Mammary epithelial cell (primary cell): ENCODE measurements at regions of chr13 and their contacts with region 1.

Region 1: GRCh38 chr13:21458813-21459701 is at the start of gene ZDHHC20:
- DNase-seq: peak; percentile 78
- H3K4me3 ChIP-seq: peak within 1 kb of the TSS; percentile 92 to 99 (median 95)
- H3K27ac ChIP-seq: peak within 1 kb of the TSS; percentile 70
- H3K4me1 ChIP-seq: peaks cover 3% of the 10 kb centered on the region
- H3K27me3 ChIP-seq: no peaks in the 10 kb centered on the region
- CTCF ChIP-seq: no peak
- total RNA-seq, gene ZDHHC20: 53.7 to 68.3 TPM

Region 2: DNA sequence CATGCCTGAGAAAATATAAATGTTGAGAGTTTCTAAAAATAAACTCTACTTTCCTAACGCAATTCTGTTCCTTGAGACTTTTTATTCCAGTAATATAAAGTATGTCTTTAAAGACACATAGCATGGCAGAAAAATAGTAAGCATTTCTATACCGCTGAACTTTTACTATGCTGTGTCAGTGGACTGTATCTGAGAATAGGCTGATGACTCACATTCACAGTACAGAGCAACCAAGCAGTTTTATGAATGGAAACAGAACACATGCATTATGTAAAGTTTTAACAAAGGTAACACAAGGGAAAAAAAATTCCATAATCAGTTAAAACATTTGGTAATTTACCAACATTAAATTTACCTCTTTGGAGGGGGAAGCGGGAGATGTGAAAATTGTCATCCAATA is 38.4 kb before region 1 on chr13:
- CTCF ChIA-PET with region 1: no interaction called
- dilution Hi-C with region 1: no loop called
- in situ Hi-C with region 1: no loop called
- intact Hi-C with region 1: loop called (anchors 5 kb)
- DNase-seq: peak; percentile 23
- H3K4me3 ChIP-seq: no peak overlapping the region
- H3K27ac ChIP-seq: no peak overlapping the region
- H3K4me1 ChIP-seq: no peaks in the 10 kb centered on the region
- H3K27me3 ChIP-seq: no peaks in the 10 kb centered on the region
- CTCF ChIP-seq: no peak

Region 3: GRCh38 chr13:21435710-21436151 is 23.3 kb before region 1 on chr13:
- CTCF ChIA-PET with region 1: no interaction called
- dilution Hi-C with region 1: no loop called
- in situ Hi-C with region 1: no loop called
- intact Hi-C with region 1: loop called (anchors 2 kb)
- DNase-seq: peak; percentile 91
- H3K4me3 ChIP-seq: peak overlapping the region in 1 of 3 experiments; percentile 8
- H3K27ac ChIP-seq: peak overlapping the region; percentile 83
- H3K4me1 ChIP-seq: peaks cover 11% of the 10 kb centered on the region
- H3K27me3 ChIP-seq: no peaks in the 10 kb centered on the region
- CTCF ChIP-seq: no peak

Region 4: DNA sequence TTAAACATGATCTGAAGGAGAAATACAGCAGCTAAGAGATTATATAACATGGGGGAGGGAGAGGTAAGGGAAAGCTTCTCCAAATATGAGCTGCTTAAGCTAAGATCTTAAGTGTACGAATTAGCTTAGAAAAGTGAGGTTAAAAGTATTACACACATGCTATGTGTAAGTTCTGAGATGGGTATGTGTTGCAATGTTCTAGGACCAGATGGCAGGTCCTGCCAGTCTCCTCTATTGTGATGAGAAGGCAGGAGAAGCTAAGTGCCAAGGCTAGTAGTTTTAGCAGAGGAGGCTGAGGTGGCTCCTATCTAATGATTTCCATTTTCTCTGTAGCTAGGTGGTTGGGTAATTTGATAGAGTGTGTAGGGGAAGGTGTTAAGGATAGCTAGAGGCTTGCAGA is 87.3 kb after region 1 on chr13:
- CTCF ChIA-PET with region 1: no interaction called
- dilution Hi-C with region 1: no loop called
- in situ Hi-C with region 1: no loop called
- intact Hi-C with region 1: no loop called
- DNase-seq: no peak
- H3K4me3 ChIP-seq: no peak overlapping the region
- H3K27ac ChIP-seq: no peak overlapping the region
- H3K4me1 ChIP-seq: no peaks in the 10 kb centered on the region
- H3K27me3 ChIP-seq: no peaks in the 10 kb centered on the region
- CTCF ChIP-seq: no peak

Region 5: GRCh38 chr13:21603531-21604448 is 144.7 kb after region 1 on chr13 and contains the start of gene MICU2:
- CTCF ChIA-PET with region 1: no interaction called
- dilution Hi-C with region 1: no loop called
- in situ Hi-C with region 1: no loop called
- intact Hi-C with region 1: no loop called
- DNase-seq: peak; percentile 94
- H3K4me3 ChIP-seq: peak within 1 kb of the TSS; percentile 60 to 83 (median 76)
- H3K27ac ChIP-seq: peak within 1 kb of the TSS; percentile 77
- H3K4me1 ChIP-seq: no peaks in the 10 kb centered on the region
- H3K27me3 ChIP-seq: no peaks in the 10 kb centered on the region
- CTCF ChIP-seq: no peak
- total RNA-seq, gene MICU2: 22.0 to 37.7 TPM